ENCODE measurements at regions of chr15 and their contacts with region 1.

Region 1: DNA sequence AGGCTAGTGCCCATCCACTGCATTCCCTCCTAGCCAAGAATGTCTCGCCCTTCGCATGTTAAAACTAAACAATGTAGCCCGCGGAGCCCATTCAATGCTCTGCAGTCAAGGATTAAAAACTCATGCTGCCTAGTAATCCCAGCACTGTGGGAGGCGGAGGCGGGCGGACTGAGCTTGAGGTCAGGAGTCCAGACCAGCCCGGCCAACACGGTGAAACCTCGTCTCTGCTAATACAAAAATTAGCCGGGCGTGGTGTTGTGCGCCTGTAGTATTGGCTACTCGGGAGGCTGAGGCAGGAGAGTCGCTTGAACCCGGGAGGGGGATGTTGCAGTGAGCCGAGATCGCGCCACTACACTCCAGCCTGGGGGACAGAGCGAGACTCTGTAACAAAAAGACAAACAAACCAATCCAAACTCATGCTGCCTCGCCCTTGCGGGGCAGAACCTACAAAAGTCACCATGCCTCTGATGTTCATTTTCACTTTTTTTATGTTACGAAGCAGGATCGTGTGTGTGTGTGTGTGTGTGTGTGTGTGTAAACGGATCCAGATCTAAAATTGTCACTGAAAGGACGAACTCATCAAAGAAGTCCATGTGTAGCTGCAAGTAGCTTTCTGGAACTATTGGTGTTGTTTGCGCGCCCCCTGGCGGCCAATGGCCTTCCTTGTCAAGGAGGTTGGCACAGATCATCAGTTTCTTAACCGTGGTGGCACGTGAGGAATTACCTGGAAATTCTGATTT is 54.8 kb upstream of the SPESP1 start:
- DNase-seq: peak; percentile 90 to 95 (median 93)
- H3K4me3 ChIP-seq: peak overlapping the region in 5 of 7 experiments; percentile 33 to 70 (median 63)
- H3K27ac ChIP-seq: no peak overlapping the region
- H3K4me1 ChIP-seq: peaks cover 0 to 5% (median 2%) of the 10 kb centered on the region in 4 experiments
- H3K27me3 ChIP-seq: peaks cover 0 to 2% (median 0%) of the 10 kb centered on the region in 5 experiments

Region 2: DNA sequence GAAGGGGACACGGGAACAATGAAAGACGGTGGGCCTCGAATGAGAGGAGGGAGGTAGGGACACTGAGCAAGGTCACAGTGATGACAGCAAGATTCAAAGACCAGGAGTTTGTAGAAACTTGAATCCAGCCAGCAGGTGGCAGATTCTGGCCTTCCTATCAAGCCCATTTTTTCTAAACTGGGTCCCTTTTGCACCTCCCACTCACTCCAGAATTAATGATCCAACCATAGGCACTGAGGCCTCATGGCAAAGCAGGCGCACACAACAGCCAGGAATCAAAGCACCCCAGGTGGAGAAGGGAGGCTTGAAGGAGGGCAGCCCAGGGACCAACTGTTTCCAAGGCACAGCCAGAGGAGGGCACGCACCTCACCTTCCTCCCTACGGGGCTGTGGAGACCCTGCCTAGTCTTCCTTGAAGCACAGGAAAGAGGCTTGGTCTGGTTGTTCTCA is 145.1 kb before region 1 on chr15:
- CTCF ChIA-PET with region 1: interaction called, 67 read pairs
- POLR2A ChIA-PET with region 1: no interaction called
- DNase-seq: peak; percentile 65 to 82 (median 74)
- H3K4me3 ChIP-seq: no peak overlapping the region
- H3K27ac ChIP-seq: no peak overlapping the region
- H3K4me1 ChIP-seq: peaks cover 13 to 35% (median 18%) of the 10 kb centered on the region in 4 experiments
- H3K27me3 ChIP-seq: no peaks in the 10 kb centered on the region

Region 3: GRCh38 chr15:68783226-68784058 is 92.1 kb before region 1 on chr15:
- CTCF ChIA-PET with region 1: interaction called, 54 read pairs
- POLR2A ChIA-PET with region 1: no interaction called
- DNase-seq: peak; percentile 56 to 67 (median 66)
- H3K4me3 ChIP-seq: peak overlapping the region in 2 of 7 experiments; percentile 1 to 35
- H3K27ac ChIP-seq: peak overlapping the region; percentile 18 to 75
- H3K4me1 ChIP-seq: peaks cover 20 to 79% (median 73%) of the 10 kb centered on the region in 4 experiments
- H3K27me3 ChIP-seq: no peaks in the 10 kb centered on the region

Region 4: DNA sequence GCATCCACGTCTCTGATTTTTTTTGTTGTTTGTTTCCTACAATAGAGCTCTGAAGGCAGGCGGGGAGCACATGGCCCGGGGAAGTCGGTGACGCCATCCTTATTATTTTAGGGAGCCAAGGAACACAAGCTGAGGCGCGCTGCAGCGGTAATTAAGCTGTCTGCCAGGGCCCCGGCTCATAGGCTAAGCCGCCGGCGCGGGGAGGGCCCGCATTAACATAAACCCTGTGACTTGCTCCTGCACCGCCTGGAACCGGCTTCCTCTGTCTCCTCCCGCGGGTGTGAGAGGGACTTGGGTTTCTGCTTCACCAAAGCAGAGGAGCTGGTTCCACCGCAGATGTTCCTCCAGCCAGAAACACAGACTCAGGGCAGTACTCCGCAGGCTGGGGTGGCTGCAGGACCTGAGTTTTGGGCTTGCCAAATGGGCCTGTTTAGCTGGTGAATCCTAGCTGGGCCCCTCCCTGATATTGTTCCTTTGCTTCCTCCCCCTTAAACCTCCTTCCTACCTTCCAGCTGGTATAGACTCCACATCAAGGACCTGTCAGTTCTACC is 80.2 kb before region 1 on chr15:
- CTCF ChIA-PET with region 1: interaction called, 10 read pairs
- POLR2A ChIA-PET with region 1: no interaction called
- DNase-seq: peak in 2 of 3 donors; percentile 87 to 88
- H3K4me3 ChIP-seq: peak overlapping the region in 6 of 7 experiments; percentile 1 to 60 (median 35)
- H3K27ac ChIP-seq: peak overlapping the region in 1 of 2 experiments; percentile 60
- H3K4me1 ChIP-seq: peaks cover 29 to 93% (median 73%) of the 10 kb centered on the region in 4 experiments
- H3K27me3 ChIP-seq: no peaks in the 10 kb centered on the region

Region 5: GRCh38 chr15:69253156-69253555 is 377.6 kb after region 1 on chr15:
- CTCF ChIA-PET with region 1: no interaction called
- POLR2A ChIA-PET with region 1: no interaction called
- DNase-seq: no peak
- H3K4me3 ChIP-seq: no peak overlapping the region
- H3K27ac ChIP-seq: no peak overlapping the region
- H3K4me1 ChIP-seq: no peaks in the 10 kb centered on the region
- H3K27me3 ChIP-seq: no peaks in the 10 kb centered on the region